Heart right ventricle (tissue), 16 donors: ENCODE measurements at regions of chr4 and their contacts with region 1.

Region 1: GRCh38 chr4:47598320-47598719 is 113.2 kb downstream of the ATP10D start:
- DNase-seq: no peak
- ATAC-seq: peak in 1 of 8 donors; percentile 50
- H3K4me3 ChIP-seq: no peak overlapping the region
- H3K27ac ChIP-seq: no peak overlapping the region
- H3K4me1 ChIP-seq: peaks cover 0 to 8% (median 0%) of the 10 kb centered on the region in 9 donors
- H3K27me3 ChIP-seq: no peaks in the 10 kb centered on the region
- CTCF ChIP-seq: no peak

Region 2: DNA sequence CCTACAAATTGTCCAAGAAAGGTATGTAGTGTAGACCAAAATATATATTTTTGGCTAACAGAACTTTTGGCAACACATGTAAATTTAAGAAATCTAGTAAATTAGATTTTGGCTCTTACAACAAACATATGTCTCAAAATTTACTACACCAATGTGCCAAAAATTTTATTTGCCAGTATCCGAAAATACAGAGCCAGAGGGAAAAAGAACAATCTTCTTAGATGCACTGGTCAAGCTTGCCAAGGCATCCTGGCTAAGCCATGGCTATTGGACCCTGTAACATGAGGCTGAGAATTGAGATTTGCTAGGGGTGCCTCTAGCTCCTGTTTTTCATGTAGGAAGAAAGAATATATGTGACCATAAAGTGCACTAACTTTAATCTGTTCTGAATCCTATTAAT is 1566.3 kb before region 1 on chr4:
- intact Hi-C with region 1: loop called in 1 of 10 experiments (anchors 10 kb)
- DNase-seq: no peak
- ATAC-seq: no peak
- H3K4me3 ChIP-seq: no peak overlapping the region
- H3K27ac ChIP-seq: no peak overlapping the region
- H3K4me1 ChIP-seq: no peaks in the 10 kb centered on the region
- H3K27me3 ChIP-seq: no peaks in the 10 kb centered on the region
- CTCF ChIP-seq: no peak